Thyroid gland (tissue), 4 donors: ENCODE measurements at regions of chr9 and their contacts with region 1.

Region 1: GRCh38 chr9:20562051-20562450 is 60.2 kb downstream of the MLLT3 start:
- DNase-seq: no peak
- H3K4me3 ChIP-seq: no peak overlapping the region
- H3K27ac ChIP-seq: peak overlapping the region in 2 of 3 donors; percentile 29 to 60
- H3K4me1 ChIP-seq: peaks cover 77 to 78% of the 10 kb centered on the region in 2 donors
- H3K27me3 ChIP-seq: no peaks in the 10 kb centered on the region
- CTCF ChIP-seq: no peak
- POLR2A ChIP-seq: no peak

Region 2: GRCh38 chr9:20611751-20612287 is 49.8 kb after region 1 on chr9:
- intact Hi-C with region 1: loop called (anchors 10 kb)
- DNase-seq: no peak
- H3K4me3 ChIP-seq: no peak overlapping the region
- H3K27ac ChIP-seq: peak overlapping the region; percentile 26 to 47 (median 26)
- H3K4me1 ChIP-seq: peaks cover 34 to 50% of the 10 kb centered on the region in 2 donors
- H3K27me3 ChIP-seq: no peaks in the 10 kb centered on the region
- CTCF ChIP-seq: peak; percentile 37 to 82 (median 61)
- POLR2A ChIP-seq: no peak